Activated CD4-positive, alpha-beta T cell treated with anti-CD3 and anti-CD28 coated beads for 36 hours (primary cell): ENCODE measurements at regions of chr14 and their contacts with region 1.

Region 1: GRCh38 chr14:97120611-97121031 is 323.4 kb downstream of the VRK1 start:
- DNase-seq: peak; percentile 80
- ATAC-seq: peak; percentile 96
- H3K4me3 Mint-ChIP-seq: peak overlapping the region; percentile 49
- H3K27ac Mint-ChIP-seq: peak overlapping the region; percentile 96
- H3K4me1 Mint-ChIP-seq: peaks cover 30% of the 10 kb centered on the region
- H3K27me3 Mint-ChIP-seq: no peaks in the 10 kb centered on the region

Region 2: GRCh38 chr14:97177015-97177414 is 56.4 kb after region 1 on chr14:
- CTCF ChIA-PET with region 1: no interaction called
- POLR2A ChIA-PET with region 1: interaction called, 3 read pairs
- intact Hi-C with region 1: loop called in 1 of 2 experiments (anchors 2 kb)
- DNase-seq: peak; percentile 46
- ATAC-seq: peak; percentile 25
- H3K4me3 Mint-ChIP-seq: no peak overlapping the region
- H3K27ac Mint-ChIP-seq: peak overlapping the region; percentile 34
- H3K4me1 Mint-ChIP-seq: peaks cover 34% of the 10 kb centered on the region
- H3K27me3 Mint-ChIP-seq: no peaks in the 10 kb centered on the region